HEK293T (cell line): ENCODE measurements at regions of chr13 and their contacts with region 1.

Region 1: DNA sequence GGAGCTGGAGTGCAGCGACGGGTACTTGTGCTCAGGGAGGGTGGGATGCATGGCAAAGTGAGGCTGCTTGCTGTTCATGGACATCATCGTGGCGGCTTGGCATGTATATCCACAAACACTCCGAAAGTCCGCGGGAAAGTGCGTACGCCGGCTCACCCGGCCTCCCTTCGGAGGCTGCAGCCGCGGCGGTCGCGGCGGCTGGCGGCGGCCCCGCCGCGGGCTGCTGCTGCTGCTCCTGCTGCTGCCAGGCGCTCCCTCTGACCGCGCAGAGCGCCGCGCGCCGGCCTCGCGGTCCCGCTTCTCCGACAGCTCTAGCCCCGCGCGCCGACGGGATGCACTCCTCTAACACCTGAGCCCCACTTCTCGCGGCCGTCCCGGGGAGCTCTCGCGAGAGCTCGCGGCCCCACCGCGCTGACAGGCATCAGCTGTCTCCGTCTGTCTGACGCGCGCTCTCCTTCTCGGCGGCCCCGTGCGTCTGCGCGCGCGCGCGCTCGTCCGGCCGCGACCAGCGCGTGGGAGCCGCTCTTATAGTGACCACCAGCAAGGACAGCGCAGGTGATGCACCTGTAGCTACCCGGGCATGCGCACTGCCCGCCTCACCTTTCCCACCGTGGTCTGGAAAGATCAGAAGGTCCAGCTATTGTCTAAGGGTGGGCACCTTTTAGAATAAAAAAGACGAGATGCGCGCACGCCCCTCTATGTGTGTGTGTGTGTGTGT is at the start of gene POU4F1:
- DNase-seq: peak; percentile 99

Region 2: GRCh38 chr13:78586706-78587105 is 16.7 kb before region 1 on chr13:
- CTCF ChIA-PET with region 1: interaction called, 10 read pairs
- POLR2A ChIA-PET with region 1: interaction called, 5 read pairs
- DNase-seq: peak; percentile 65

Region 3: DNA sequence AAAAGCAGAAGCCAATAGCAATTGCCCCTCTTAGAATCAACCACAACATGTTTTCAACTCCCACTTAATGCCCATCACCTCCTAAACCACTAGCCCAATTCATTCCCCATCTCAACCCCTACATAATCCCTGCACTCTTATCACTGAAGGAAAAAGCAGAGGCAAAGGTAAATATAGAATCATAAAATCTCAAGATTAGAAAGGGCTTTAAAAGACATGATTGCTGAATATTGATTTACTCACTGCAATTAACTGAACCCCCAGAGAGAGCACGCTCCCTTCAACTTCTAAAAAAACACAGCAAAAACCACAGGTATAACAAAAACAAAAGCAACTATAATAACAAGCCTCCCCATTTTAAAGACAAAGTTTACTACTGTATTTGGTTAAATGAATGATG is 15.0 kb after region 1 on chr13:
- CTCF ChIA-PET with region 1: interaction called, 7 read pairs
- POLR2A ChIA-PET with region 1: interaction called, 11 read pairs
- DNase-seq: no peak

Region 4: DNA sequence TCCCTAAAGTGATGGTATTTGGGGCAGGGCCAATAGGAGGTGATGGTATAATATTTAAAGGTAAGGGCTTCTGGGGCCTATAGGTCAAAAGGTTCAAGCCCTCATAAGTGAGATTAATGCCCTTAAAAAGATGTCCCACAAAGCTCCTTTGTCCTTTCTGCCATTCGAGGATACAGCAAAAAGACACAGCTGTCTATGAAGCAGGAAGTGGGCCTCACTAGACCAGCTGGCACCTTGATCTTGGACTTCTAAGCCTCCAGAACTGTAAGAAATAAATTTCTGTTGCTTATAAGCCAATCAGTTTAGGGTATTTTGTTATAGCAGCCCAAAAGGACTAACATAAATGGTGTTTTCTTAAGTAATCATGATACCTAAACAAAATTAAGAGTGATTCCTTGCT is 27.1 kb after region 1 on chr13:
- CTCF ChIA-PET with region 1: no interaction called
- POLR2A ChIA-PET with region 1: no interaction called
- DNase-seq: no peak

Region 5: GRCh38 chr13:78867655-78868054 is 264.3 kb after region 1 on chr13:
- CTCF ChIA-PET with region 1: no interaction called
- POLR2A ChIA-PET with region 1: no interaction called
- DNase-seq: no peak